ENCODE measurements at regions of chr12 and their contacts with region 1.

Region 1: GRCh38 chr12:53508534-53509199 is 1.4 kb upstream of the NPFF start:
- DNase-seq: peak; percentile 77 to 97
- H3K4me3 ChIP-seq: no peak overlapping the region
- H3K27ac ChIP-seq: no peak overlapping the region
- H3K4me1 ChIP-seq: no peaks in the 10 kb centered on the region
- H3K27me3 ChIP-seq: no peaks in the 10 kb centered on the region
- CTCF ChIP-seq: peak; percentile 94 to 99 (median 98)
- EP300 ChIP-seq: no peak
- POLR2A ChIP-seq: no peak
- RAD21 ChIP-seq: peak; percentile 99

Region 2: DNA sequence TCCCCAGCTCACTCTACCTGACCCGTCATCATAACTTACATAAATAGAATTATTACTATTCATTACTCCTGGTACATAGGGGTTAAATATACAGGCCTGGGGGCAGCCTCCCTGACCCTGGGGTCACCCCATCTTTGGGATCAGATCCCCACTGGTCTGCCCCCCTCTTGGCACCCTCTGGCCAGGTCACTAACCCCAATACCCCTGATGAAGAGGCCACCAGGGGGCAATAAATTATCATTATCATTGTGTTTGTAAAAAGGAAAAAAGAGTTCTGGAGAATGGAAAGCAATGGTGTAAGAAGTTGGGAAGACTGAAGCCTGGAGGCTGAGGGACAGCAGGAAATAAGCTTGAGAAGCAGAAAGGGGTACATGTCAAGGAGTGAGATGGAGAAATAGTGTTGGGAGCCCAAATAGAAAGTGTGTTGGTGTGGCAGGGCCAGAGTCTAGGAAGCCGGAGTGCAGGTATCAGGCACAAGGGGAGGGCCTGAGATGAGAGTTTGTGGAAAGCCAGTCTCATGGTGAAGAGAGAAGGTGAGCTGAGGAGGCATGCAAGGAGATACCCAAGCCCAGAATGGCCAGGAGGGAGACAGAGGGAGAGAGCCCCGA is 181.1 kb before region 1 on chr12:
- CTCF ChIA-PET with region 1: interaction called, 16 read pairs
- POLR2A ChIA-PET with region 1: interaction called, 6 read pairs
- DNase-seq: no peak
- H3K4me3 ChIP-seq: no peak overlapping the region
- H3K27ac ChIP-seq: no peak overlapping the region
- H3K4me1 ChIP-seq: peaks cover 0 to 17% (median 9%) of the 10 kb centered on the region in 4 experiments; a peak in 6 of 7 replicates
- H3K27me3 ChIP-seq: peaks cover 13 to 56% (median 48%) of the 10 kb centered on the region in 4 experiments
- CTCF ChIP-seq: no peak
- EP300 ChIP-seq: no peak
- POLR2A ChIP-seq: no peak
- RAD21 ChIP-seq: peak in 1 of 2 experiments; percentile 15; a peak in 1 of 4 replicates

Region 3: GRCh38 chr12:53492830-53493611 is 15.6 kb before region 1 on chr12:
- CTCF ChIA-PET with region 1: interaction called, 51 read pairs
- POLR2A ChIA-PET with region 1: interaction called, 3,397 read pairs
- DNase-seq: peak; percentile 86 to 96
- H3K4me3 ChIP-seq: peak overlapping the region; percentile 54 to 65 (median 57)
- H3K27ac ChIP-seq: peak overlapping the region; percentile 55; the same call in 1 of the 2 replicates
- H3K4me1 ChIP-seq: peaks cover 11 to 37% (median 15%) of the 10 kb centered on the region in 4 experiments
- H3K27me3 ChIP-seq: no peaks in the 10 kb centered on the region
- CTCF ChIP-seq: no peak
- EP300 ChIP-seq: no peak; a peak in 1 of 3 replicates
- POLR2A ChIP-seq: peak in 1 of 2 experiments; percentile 76; a peak in 2 of 3 replicates
- RAD21 ChIP-seq: no peak

Region 4: GRCh38 chr12:53727310-53728041 is 218.8 kb after region 1 on chr12 and contains the start of gene CALCOCO1:
- CTCF ChIA-PET with region 1: no interaction called
- POLR2A ChIA-PET with region 1: no interaction called
- DNase-seq: peak; percentile 90
- H3K4me3 ChIP-seq: peak within 1 kb of the TSS; percentile 71 to 94 (median 82)
- H3K27ac ChIP-seq: no peak within 1 kb of the TSS
- H3K4me1 ChIP-seq: peaks cover 0 to 11% (median 1%) of the 10 kb centered on the region in 4 experiments; a peak in 5 of 7 replicates
- H3K27me3 ChIP-seq: peaks cover 0 to 3% (median 0%) of the 10 kb centered on the region in 4 experiments; a peak in 1 of 7 replicates
- CTCF ChIP-seq: no peak
- EP300 ChIP-seq: no peak
- POLR2A ChIP-seq: no peak
- RAD21 ChIP-seq: no peak
- total RNA-seq, gene CALCOCO1: 18.7 and 20.3 TPM in 2 replicates